CD14-positive monocyte (primary cell): ENCODE measurements at regions of chr11 and their contacts with region 1.

Region 1: GRCh38 chr11:44344921-44345320 is 35.0 kb upstream of the ALX4 start:
- DNase-seq: no peak
- H3K4me3 ChIP-seq: no peak overlapping the region
- H3K4me3 Mint-ChIP-seq: no peak overlapping the region
- H3K27ac ChIP-seq: no peak overlapping the region
- H3K27ac Mint-ChIP-seq: peak overlapping the region in 1 of 7 donors; percentile 42
- H3K4me1 ChIP-seq: no peaks in the 10 kb centered on the region
- H3K4me1 Mint-ChIP-seq: no peaks in the 10 kb centered on the region
- H3K27me3 ChIP-seq: no peaks in the 10 kb centered on the region
- H3K27me3 Mint-ChIP-seq: peaks cover 9 to 21% (median 16%) of the 10 kb centered on the region in 3 donors
- CTCF ChIP-seq: no peak

Region 2: DNA sequence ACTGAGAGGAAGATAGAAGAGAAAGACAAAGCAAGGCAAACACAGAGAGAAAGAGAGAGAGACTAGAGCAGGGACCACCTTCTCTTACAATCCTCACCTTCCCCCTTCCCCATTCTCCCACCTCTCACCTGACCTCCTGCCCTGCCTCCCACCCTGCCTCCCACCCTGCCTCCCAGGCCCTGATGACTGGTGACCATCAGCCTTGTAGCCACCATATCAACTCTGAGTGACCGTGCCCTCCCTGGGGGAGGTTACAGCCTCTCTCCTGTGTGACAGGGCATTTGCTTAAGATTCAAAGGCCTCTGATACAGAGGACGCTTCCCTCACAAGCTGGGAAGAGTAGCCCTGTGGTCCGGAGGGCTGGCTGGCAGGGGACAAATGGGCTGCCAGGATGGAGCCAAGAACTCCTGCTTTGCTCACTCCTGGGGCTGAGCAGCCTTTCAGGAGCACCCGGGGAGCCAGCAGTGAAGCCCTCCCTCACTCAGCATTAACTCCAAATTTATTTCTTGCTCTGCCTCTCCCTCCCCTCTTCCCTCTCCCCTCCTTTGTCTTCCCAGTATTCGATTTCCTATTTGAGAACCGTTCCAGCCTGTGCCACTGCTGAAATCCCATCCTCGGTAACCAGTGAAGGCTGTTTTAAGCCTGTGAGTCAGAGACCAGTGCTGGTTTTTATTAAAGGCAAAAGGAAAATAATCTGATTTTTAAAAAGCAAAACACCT is 1066.5 kb after region 1 on chr11:
- intact Hi-C with region 1: loop called in 1 of 2 experiments (anchors 10 kb)
- DNase-seq: no peak
- H3K4me3 ChIP-seq: no peak overlapping the region
- H3K4me3 Mint-ChIP-seq: no peak overlapping the region
- H3K27ac ChIP-seq: no peak overlapping the region
- H3K27ac Mint-ChIP-seq: no peak overlapping the region
- H3K4me1 ChIP-seq: no peaks in the 10 kb centered on the region
- H3K4me1 Mint-ChIP-seq: no peaks in the 10 kb centered on the region
- H3K27me3 ChIP-seq: peaks cover 13 to 30% of the 10 kb centered on the region in 2 donors
- H3K27me3 Mint-ChIP-seq: peaks cover 32 to 49% (median 39%) of the 10 kb centered on the region in 3 donors
- CTCF ChIP-seq: no peak